ENCODE measurements at regions of chr1 and their contacts with region 1.

Region 1: DNA sequence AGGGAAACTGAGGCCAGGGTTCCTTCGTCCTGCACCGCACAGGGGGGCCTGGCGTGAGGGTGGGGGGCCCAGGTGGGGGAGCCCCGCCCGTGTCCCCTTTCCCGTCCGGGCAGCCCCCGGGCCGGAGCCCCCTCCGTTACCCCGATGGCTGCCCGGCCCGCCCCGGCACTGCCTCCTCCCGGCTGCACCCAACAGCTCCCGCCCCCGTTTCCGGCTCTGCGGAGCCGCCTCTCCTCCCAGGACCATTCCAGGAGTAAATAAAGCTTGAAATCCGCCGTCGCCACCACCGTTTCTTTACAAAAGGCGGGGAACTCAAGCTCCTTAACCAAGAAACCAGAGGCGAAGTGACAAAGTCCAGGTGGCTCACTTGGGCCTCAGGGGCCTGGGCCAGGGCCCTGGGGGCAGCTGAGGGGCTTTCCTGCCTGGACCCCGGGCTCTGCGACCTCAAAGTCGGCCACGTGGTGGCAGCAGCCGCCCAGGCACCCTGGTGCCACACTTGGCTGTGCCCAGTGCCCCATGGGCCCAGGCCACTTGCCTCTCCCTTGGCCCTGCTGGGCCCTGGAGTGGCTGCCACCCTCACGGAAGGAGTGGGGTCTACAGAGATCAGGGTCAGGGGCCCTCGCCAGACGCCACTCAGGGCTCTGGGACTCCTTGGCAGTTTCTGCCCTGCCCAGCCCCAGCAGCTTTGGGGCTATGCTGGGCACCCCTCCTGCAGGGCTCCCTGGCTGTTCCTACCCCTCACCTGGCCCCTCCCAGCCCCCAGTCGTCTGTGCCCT is 514 bp upstream of the FAAP20 start:
- DNase-seq: peak; percentile 93
- ATAC-seq: peak; percentile 75
- H3K4me3 ChIP-seq: peak overlapping the region; percentile 46 to 81 (median 63)
- H3K4me3 Mint-ChIP-seq: peak overlapping the region; percentile 93
- H3K27ac ChIP-seq: peak overlapping the region; percentile 80 to 84
- H3K27ac Mint-ChIP-seq: peak overlapping the region; percentile 96
- H3K4me1 ChIP-seq: peaks cover 26 to 41% of the 10 kb centered on the region in 2 donors
- H3K4me1 Mint-ChIP-seq: peaks cover 24% of the 10 kb centered on the region
- H3K27me3 ChIP-seq: no peaks in the 10 kb centered on the region
- H3K27me3 Mint-ChIP-seq: no peaks in the 10 kb centered on the region
- CTCF ChIP-seq: peak; percentile 90

Region 2: DNA sequence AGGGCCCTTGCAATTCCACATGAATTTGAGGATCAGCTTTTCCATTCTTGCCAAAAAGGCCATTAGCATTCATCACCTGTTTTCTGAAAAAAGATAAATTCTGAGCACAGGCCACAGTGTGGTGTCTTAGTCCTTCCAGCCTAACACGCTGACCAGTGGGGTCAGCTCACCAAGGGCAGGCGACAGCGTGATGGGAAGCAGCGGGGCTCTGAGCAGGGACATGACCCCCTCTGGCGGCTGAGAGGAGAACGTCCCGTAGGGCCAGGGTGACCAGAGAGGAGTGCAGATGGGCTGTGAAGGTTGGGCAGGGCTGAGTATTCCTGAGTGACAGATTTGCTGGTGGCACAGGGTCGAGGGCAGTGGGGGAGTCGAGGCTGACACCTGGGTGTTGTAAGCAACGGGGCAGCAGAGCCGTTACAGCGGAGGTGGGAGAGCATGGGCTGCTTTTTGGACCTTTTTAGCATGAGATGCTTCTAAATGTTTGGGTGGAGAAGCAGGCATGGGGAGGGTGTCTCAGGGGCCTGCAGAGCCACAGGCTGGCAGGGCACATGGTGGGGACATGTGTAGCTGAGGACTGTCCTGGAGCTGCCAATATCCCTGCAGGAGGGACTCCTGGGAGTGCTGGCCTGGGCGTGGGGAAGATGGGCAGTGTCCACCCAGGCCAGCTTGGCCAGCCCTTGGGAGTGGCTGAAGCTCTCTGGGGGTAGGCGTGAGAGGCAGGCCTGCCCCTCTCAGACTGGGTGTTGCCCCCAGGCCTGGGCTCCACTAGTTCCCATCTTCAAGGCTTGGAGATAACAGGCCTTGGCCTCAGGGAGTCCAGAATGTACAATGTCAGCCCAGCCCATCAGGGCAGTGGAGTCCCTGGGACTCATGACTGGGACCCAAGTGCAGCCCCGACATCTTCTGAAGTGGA is 288.6 kb before region 1 on chr1:
- CTCF ChIA-PET with region 1: no interaction called
- POLR2A ChIA-PET with region 1: no interaction called
- intact Hi-C with region 1: loop called (anchors 5 kb)
- DNase-seq: peak; percentile 80
- ATAC-seq: peak; percentile 21
- H3K4me3 ChIP-seq: no peak overlapping the region
- H3K4me3 Mint-ChIP-seq: peak overlapping the region; percentile 66
- H3K27ac ChIP-seq: peak overlapping the region in 1 of 2 donors; percentile 30
- H3K27ac Mint-ChIP-seq: peak overlapping the region; percentile 75
- H3K4me1 ChIP-seq: peaks cover 28 to 42% of the 10 kb centered on the region in 2 donors
- H3K4me1 Mint-ChIP-seq: peaks cover 33% of the 10 kb centered on the region
- H3K27me3 ChIP-seq: no peaks in the 10 kb centered on the region
- H3K27me3 Mint-ChIP-seq: no peaks in the 10 kb centered on the region
- CTCF ChIP-seq: peak; percentile 96

Region 3: GRCh38 chr1:2300851-2301606 is 105.9 kb after region 1 on chr1:
- CTCF ChIA-PET with region 1: interaction called, 12 read pairs
- POLR2A ChIA-PET with region 1: interaction called, 6 read pairs
- intact Hi-C with region 1: loop called (anchors 1 kb)
- DNase-seq: peak; percentile 99
- ATAC-seq: peak; percentile 80
- H3K4me3 ChIP-seq: peak overlapping the region in 4 of 5 experiments; percentile 65 to 78 (median 70)
- H3K4me3 Mint-ChIP-seq: peak overlapping the region; percentile 93
- H3K27ac ChIP-seq: peak overlapping the region; percentile 99
- H3K27ac Mint-ChIP-seq: peak overlapping the region; percentile 99
- H3K4me1 ChIP-seq: peaks cover 40 to 56% of the 10 kb centered on the region in 2 donors
- H3K4me1 Mint-ChIP-seq: peaks cover 55% of the 10 kb centered on the region
- H3K27me3 ChIP-seq: no peaks in the 10 kb centered on the region
- H3K27me3 Mint-ChIP-seq: no peaks in the 10 kb centered on the region
- CTCF ChIP-seq: no peak

Region 4: DNA sequence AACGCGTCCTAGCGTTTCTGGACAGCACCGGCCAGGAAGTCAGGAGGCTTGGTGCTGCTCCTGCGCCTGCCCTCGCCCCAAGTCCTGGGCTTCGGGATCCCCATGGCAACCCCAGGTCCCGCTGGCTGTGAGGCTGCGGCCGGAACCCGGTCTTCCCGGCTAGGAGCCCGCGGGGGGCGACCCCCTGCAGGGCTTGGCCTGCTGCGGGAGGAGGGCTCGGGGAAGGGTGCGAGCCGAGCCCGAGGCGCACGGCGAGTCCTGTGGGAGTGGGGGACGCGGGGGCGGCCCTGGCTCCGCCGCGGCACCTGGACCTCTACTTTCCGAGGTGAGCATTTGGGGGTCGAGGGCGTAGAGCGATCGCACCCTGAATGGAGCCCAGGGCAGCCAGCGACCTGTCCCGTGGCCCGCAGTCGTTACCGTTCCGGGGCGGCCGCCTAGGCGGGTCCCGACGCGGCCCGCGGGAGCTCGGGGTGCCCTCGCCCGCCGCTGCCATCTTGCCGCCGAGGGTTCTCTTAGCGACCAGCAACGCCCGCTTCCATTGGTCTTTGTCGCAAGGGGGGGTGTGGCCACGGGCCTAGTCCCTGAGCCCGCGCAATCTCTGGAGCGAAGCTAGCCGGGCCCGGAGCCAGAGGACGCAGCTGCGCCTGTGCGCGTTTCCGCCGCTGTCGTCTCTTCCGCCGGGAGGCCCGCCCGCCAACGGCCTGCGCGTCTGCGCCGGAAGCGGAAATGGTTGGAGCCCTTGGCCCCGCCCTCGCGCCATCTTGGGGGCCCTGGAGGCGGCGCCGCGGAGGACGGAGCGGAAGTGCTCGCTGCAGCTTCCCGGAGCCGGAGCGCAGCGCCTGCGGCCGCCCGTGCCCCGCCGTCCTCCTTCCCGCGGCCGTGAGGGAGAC is 196.2 kb after region 1 on chr1 and contains the starts of genes MORN1 and RER1:
- CTCF ChIA-PET with region 1: interaction called, 295 read pairs
- POLR2A ChIA-PET with region 1: interaction called, 9 read pairs
- intact Hi-C with region 1: loop called (anchors 2 kb)
- DNase-seq: peak; percentile 99
- ATAC-seq: peak; percentile 94
- H3K4me3 ChIP-seq: peak within 1 kb of the TSS; percentile 61 to 92 (median 76)
- H3K4me3 Mint-ChIP-seq: peak within 1 kb of the TSS; percentile 92
- H3K27ac ChIP-seq: peak within 1 kb of the TSS; percentile 24 to 88
- H3K27ac Mint-ChIP-seq: peak within 1 kb of the TSS; percentile 88
- H3K4me1 ChIP-seq: peaks cover 25 to 47% of the 10 kb centered on the region in 2 donors
- H3K4me1 Mint-ChIP-seq: peaks cover 47% of the 10 kb centered on the region
- H3K27me3 ChIP-seq: no peaks in the 10 kb centered on the region
- H3K27me3 Mint-ChIP-seq: no peaks in the 10 kb centered on the region
- CTCF ChIP-seq: no peak
- total RNA-seq, gene MORN1: 30.4 and 32.6 TPM in 2 replicates
- total RNA-seq, gene RER1: 117 and 118 TPM in 2 replicates

Region 5: GRCh38 chr1:2545759-2546514 is 350.9 kb after region 1 on chr1:
- CTCF ChIA-PET with region 1: interaction called, 29 read pairs
- POLR2A ChIA-PET with region 1: interaction called, 12 read pairs
- intact Hi-C with region 1: loop called (anchors 1 kb)
- DNase-seq: peak; percentile 95
- ATAC-seq: peak; percentile 52
- H3K4me3 ChIP-seq: peak overlapping the region in 4 of 5 experiments; percentile 69 to 89 (median 76)
- H3K4me3 Mint-ChIP-seq: peak overlapping the region; percentile 92
- H3K27ac ChIP-seq: peak overlapping the region; percentile 99 to 100
- H3K27ac Mint-ChIP-seq: peak overlapping the region; percentile 98
- H3K4me1 ChIP-seq: peaks cover 34 to 47% of the 10 kb centered on the region in 2 donors
- H3K4me1 Mint-ChIP-seq: peaks cover 33% of the 10 kb centered on the region
- H3K27me3 ChIP-seq: peaks cover 0 to 16% (median 2%) of the 10 kb centered on the region in 4 experiments
- H3K27me3 Mint-ChIP-seq: peaks cover 6% of the 10 kb centered on the region
- CTCF ChIP-seq: no peak

Region 6: DNA sequence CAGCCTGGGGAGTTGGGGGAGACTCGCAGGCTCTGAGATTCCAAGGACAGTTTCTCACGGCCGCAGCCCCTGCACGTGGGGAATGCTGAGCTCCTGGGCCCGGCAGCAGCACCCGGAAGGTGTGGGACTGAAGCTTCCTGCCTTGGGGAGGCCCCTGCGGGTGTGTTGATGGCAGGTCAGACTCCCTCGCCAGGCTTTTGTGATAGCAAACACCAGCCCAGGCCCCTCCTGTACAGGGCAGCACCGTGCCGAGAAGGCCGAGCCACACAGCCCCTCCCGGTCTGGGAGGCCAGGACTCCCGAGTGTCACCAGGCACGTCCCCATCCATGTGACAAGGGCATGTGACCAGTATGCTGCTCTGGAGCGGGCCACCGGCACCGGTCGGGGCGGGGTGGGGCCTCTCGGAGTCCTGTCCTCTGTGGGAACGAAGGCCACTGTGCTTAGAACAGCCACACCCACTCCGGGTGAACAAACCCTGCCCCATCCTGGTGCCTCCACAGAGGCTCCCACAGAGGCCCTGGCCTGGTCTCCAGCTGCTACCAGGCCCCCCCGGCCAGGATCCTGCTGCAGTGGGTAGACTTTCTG is 1228.3 kb after region 1 on chr1:
- CTCF ChIA-PET with region 1: no interaction called
- POLR2A ChIA-PET with region 1: no interaction called
- intact Hi-C with region 1: loop called (anchors 10 kb)
- DNase-seq: no peak
- ATAC-seq: no peak
- H3K4me3 ChIP-seq: no peak overlapping the region
- H3K4me3 Mint-ChIP-seq: no peak overlapping the region
- H3K27ac ChIP-seq: no peak overlapping the region
- H3K27ac Mint-ChIP-seq: no peak overlapping the region
- H3K4me1 ChIP-seq: peaks cover 0 to 6% of the 10 kb centered on the region in 2 donors
- H3K4me1 Mint-ChIP-seq: no peaks in the 10 kb centered on the region
- H3K27me3 ChIP-seq: peaks cover 0 to 3% (median 0%) of the 10 kb centered on the region in 4 experiments
- H3K27me3 Mint-ChIP-seq: peaks cover 15% of the 10 kb centered on the region
- CTCF ChIP-seq: no peak